ENCODE measurements at regions of chr17 and their contacts with region 1.

Region 1: GRCh38 chr17:44829523-44830358 is at the start of gene GJC1:
- DNase-seq: peak; percentile 49 to 77 (median 69)
- ATAC-seq: peak in 3 of 4 donors; percentile 65 to 79 (median 71)
- H3K4me3 ChIP-seq: peak within 1 kb of the TSS; percentile 63 to 91 (median 76)
- H3K27ac ChIP-seq: peak within 1 kb of the TSS; percentile 79 to 96 (median 90)
- H3K4me1 ChIP-seq: peaks cover 0 to 28% (median 10%) of the 10 kb centered on the region in 12 donors
- H3K27me3 ChIP-seq: peaks cover 0 to 68% (median 4%) of the 10 kb centered on the region in 9 donors
- CTCF ChIP-seq: no peak
- POLR2A ChIP-seq: peak in 1 of 2 donors; percentile 26
- total RNA-seq, gene GJC1: 16.8 to 60.8 (median 24.9) TPM

Region 2: DNA sequence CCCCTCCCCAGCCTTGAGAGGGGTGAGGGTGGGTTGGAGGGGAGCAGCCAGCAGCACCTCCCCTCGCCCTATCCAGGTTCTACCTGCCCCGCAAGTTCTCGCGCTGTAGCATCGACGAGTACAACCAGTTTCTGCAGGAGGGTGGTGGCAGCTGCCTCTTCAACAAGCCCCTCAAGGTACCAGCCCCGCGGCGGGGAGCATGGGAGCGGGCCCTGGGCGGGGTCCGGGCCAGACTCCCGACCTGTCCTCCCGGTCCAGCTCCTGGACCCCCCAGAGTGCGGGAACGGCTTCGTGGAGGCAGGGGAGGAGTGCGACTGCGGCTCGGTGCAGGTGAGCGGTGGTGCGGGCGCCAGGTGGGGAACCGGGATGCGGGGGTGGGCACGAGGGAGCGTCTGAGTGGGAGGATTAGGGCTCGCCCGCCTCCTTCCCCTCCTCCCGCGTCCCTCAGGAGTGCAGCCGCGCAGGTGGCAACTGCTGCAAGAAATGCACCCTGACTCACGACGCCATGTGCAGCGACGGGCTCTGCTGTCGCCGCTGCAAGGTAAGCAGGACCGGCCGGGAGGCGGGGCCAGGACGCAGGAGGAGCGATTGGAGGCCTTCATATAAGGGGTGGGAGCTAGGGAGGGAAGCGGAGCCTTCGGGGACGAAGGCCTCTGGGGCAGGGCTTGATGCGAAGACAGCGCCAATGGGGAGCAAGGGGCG is 54.5 kb before region 1 on chr17:
- intact Hi-C with region 1: loop called in 9 of 10 experiments (anchors 2 to 5 kb)
- DNase-seq: peak in 4 of 5 donors; percentile 96 to 98 (median 96)
- ATAC-seq: peak; percentile 93 to 94 (median 94)
- H3K4me3 ChIP-seq: peak overlapping the region; percentile 31 to 74 (median 63)
- H3K27ac ChIP-seq: peak overlapping the region in 6 of 12 donors; percentile 7 to 82 (median 36)
- H3K4me1 ChIP-seq: peaks cover 0 to 30% (median 21%) of the 10 kb centered on the region in 12 donors
- H3K27me3 ChIP-seq: no peaks in the 10 kb centered on the region
- CTCF ChIP-seq: peak in 3 of 12 donors; percentile 3 to 38 (median 7)
- POLR2A ChIP-seq: no peak

Region 3: GRCh38 chr17:44781553-44782495 is 47.9 kb before region 1 on chr17:
- intact Hi-C with region 1: loop called (anchors 2 to 5 kb)
- DNase-seq: peak; percentile 59 to 83 (median 73)
- ATAC-seq: peak; percentile 4 to 53 (median 36)
- H3K4me3 ChIP-seq: peak overlapping the region in 5 of 12 donors; percentile 5 to 25 (median 13)
- H3K27ac ChIP-seq: peak overlapping the region; percentile 51 to 93 (median 80)
- H3K4me1 ChIP-seq: peaks cover 4 to 60% (median 39%) of the 10 kb centered on the region in 12 donors
- H3K27me3 ChIP-seq: no peaks in the 10 kb centered on the region
- CTCF ChIP-seq: no peak
- POLR2A ChIP-seq: peak in 1 of 2 donors; percentile 14

Region 4: DNA sequence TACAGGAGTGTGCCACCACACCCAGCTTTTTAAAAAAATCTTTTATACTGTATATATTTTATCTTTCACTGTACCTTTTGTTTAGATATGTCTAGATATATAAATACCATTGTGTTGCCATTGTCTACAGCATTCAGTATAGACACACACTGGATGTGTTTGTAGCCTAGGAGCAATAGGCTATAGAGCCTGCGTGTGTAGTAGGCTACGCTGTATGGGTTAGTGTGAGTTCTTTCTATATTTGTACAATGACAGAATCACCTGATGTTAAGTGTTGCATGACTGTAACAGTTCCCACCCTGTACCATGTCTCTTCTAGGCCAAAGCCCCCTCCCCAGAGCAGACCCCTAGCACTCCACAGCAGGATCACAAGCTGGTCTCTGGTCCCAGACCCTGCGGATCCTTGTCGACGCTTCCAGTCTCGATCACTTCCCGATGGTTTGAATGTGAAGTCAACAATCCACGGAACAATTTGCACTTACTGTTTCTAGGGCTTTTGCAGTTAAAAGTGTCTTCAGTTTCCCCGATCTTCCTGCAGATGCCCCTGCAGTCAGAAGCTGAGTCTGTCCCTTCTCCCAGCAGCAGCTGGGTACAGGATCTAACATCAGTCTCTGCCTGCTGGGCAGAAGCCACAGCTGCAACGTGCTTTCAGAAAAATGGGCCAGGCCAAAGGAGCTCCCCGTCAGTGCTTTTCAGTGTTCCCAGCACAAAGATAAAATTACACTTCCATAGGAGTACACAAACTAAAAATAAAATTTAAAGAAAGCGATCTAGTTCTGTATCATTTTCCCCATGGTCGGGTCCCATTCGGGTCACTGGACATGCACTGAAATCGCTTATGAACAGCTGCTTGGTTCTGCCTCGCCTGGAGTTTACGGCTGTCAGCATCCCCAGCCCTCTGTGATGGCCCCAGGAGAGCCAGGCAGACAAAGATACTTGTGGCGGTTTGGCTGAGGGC is 35.6 kb before region 1 on chr17:
- intact Hi-C with region 1: no loop called
- DNase-seq: peak in 1 of 5 donors; percentile 55
- ATAC-seq: peak; percentile 39 to 60 (median 44)
- H3K4me3 ChIP-seq: peak overlapping the region in 2 of 12 donors; percentile 8 to 17
- H3K27ac ChIP-seq: peak overlapping the region; percentile 11 to 89 (median 82)
- H3K4me1 ChIP-seq: peaks cover 5 to 55% (median 32%) of the 10 kb centered on the region in 12 donors
- H3K27me3 ChIP-seq: no peaks in the 10 kb centered on the region
- CTCF ChIP-seq: peak in 1 of 12 donors; percentile 7
- POLR2A ChIP-seq: no peak

Region 5: DNA sequence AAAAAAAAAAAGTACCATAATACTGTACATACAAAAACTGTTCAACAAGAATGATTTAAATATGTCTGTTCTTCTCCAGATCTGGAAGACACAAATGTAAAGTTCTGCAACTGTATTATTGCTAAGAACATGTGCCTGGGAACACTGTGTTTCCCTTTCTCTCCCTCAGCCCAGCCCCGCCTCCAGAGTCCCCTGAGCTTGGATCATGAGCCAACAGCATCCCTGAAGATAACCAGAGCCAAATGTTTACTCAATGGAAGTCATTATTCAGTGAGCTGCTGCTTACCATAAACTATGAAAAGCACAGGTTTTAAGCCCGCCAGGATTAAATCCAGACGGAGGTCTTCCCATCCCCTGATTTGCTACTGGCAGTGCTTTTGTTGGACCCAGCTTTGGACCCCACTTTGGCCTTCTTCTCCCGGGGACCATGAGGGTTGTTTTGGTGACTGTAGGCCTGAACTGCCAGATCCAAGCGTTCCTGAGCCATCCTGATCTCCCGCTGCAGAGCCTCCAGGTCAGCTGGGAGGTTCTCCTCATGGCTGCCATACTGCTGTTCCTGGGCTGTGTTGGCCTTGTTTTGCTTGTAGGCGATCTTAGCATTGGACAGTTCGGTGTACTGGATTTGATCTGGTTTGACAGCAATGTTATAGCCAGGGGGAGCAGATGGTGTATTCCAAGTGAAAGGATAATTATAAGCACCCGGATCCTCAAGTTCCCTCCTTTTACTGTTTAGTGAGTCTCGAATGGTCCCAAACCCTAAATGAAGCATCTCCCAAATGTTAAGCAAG is 25.2 kb before region 1 on chr17:
- intact Hi-C with region 1: loop called in 1 of 10 experiments (anchors 1 kb)
- DNase-seq: peak in 4 of 5 donors; percentile 49 to 74 (median 62)
- ATAC-seq: peak; percentile 76 to 90 (median 88)
- H3K4me3 ChIP-seq: no peak overlapping the region
- H3K27ac ChIP-seq: peak overlapping the region; percentile 1 to 88 (median 74)
- H3K4me1 ChIP-seq: peaks cover 0 to 41% (median 18%) of the 10 kb centered on the region in 12 donors
- H3K27me3 ChIP-seq: no peaks in the 10 kb centered on the region
- CTCF ChIP-seq: no peak
- POLR2A ChIP-seq: no peak

Region 6: GRCh38 chr17:44864866-44865660 is 35.3 kb after region 1 on chr17:
- intact Hi-C with region 1: loop called in 3 of 10 experiments (anchors 2 to 5 kb)
- DNase-seq: peak in 4 of 5 donors; percentile 63 to 72 (median 64)
- ATAC-seq: peak; percentile 55 to 80 (median 75)
- H3K4me3 ChIP-seq: no peak overlapping the region
- H3K27ac ChIP-seq: peak overlapping the region in 2 of 12 donors; percentile 41 to 78
- H3K4me1 ChIP-seq: peaks cover 0 to 15% (median 0%) of the 10 kb centered on the region in 12 donors
- H3K27me3 ChIP-seq: no peaks in the 10 kb centered on the region
- CTCF ChIP-seq: peak; percentile 72 to 95 (median 86)
- POLR2A ChIP-seq: no peak

Region 7: DNA sequence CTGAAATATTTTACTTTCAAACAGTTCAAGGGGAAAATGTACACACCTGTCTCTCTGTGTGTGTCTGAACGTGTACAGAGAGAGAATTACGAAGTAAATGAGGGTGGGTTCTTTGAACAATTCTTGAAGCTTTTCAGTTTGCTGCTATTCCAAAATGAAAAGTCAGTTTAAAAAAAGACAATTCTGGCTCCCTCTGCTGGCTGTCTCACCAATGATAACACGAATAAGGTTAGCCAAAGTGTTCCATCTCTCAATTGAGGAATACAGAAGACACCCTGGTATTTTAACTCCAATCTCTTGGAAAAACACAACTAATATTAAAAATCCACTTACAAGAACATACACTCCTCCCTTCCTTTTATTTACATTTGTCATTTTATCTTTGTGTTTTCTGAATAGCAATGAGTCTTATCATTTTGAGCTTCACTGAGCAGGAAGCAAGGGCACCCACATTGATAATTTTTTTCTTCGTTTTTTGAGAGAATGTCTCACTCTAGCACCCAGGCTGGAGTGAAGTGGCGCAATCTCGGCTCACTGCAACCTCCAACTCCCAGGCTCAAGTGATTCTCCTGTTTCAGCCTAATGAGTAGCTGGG is 49.0 kb after region 1 on chr17:
- intact Hi-C with region 1: no loop called
- DNase-seq: no peak
- ATAC-seq: no peak
- H3K4me3 ChIP-seq: no peak overlapping the region
- H3K27ac ChIP-seq: no peak overlapping the region
- H3K4me1 ChIP-seq: no peaks in the 10 kb centered on the region
- H3K27me3 ChIP-seq: no peaks in the 10 kb centered on the region
- CTCF ChIP-seq: peak; percentile 34 to 73 (median 60)
- POLR2A ChIP-seq: no peak

Measured in heart left ventricle (tissue), 16 donors.